Naive thymus-derived CD4-positive, alpha-beta T cell (primary cell): ENCODE measurements at regions of chr12 and their contacts with region 1.

Region 1: GRCh38 chr12:117587631-117588287 is 226.3 kb upstream of the NOS1 start:
- DNase-seq: peak in 3 of 9 donors; percentile 3 to 53 (median 5)
- ATAC-seq: peak; percentile 46
- H3K4me3 ChIP-seq: no peak overlapping the region
- H3K4me3 Mint-ChIP-seq: no peak overlapping the region
- H3K27ac ChIP-seq: no peak overlapping the region
- H3K27ac Mint-ChIP-seq: no peak overlapping the region
- H3K4me1 ChIP-seq: no peaks in the 10 kb centered on the region
- H3K4me1 Mint-ChIP-seq: no peaks in the 10 kb centered on the region
- H3K27me3 ChIP-seq: no peaks in the 10 kb centered on the region
- H3K27me3 Mint-ChIP-seq: peaks cover 5 to 32% (median 13%) of the 10 kb centered on the region in 5 donors

Region 2: GRCh38 chr12:115810122-115810901 is 1777.4 kb before region 1 on chr12:
- CTCF ChIA-PET with region 1: no interaction called
- POLR2A ChIA-PET with region 1: no interaction called
- intact Hi-C with region 1: no loop called
- DNase-seq: no peak
- ATAC-seq: no peak
- H3K4me3 ChIP-seq: no peak overlapping the region
- H3K4me3 Mint-ChIP-seq: no peak overlapping the region
- H3K27ac ChIP-seq: no peak overlapping the region
- H3K27ac Mint-ChIP-seq: no peak overlapping the region
- H3K4me1 ChIP-seq: no peaks in the 10 kb centered on the region
- H3K4me1 Mint-ChIP-seq: no peaks in the 10 kb centered on the region
- H3K27me3 ChIP-seq: no peaks in the 10 kb centered on the region
- H3K27me3 Mint-ChIP-seq: peaks cover 0 to 27% (median 17%) of the 10 kb centered on the region in 5 donors

Region 3: GRCh38 chr12:117212563-117213190 is 375.1 kb before region 1 on chr12:
- CTCF ChIA-PET with region 1: no interaction called
- POLR2A ChIA-PET with region 1: no interaction called
- intact Hi-C with region 1: loop called in 1 of 2 experiments (anchors 2 kb)
- DNase-seq: peak; percentile 18 to 58 (median 45)
- ATAC-seq: peak; percentile 72
- H3K4me3 ChIP-seq: no peak overlapping the region
- H3K4me3 Mint-ChIP-seq: no peak overlapping the region
- H3K27ac ChIP-seq: no peak overlapping the region
- H3K27ac Mint-ChIP-seq: no peak overlapping the region
- H3K4me1 ChIP-seq: no peaks in the 10 kb centered on the region
- H3K4me1 Mint-ChIP-seq: peaks cover 0 to 4% (median 0%) of the 10 kb centered on the region in 7 donors
- H3K27me3 ChIP-seq: no peaks in the 10 kb centered on the region
- H3K27me3 Mint-ChIP-seq: peaks cover 10 to 21% (median 16%) of the 10 kb centered on the region in 5 donors

Region 4: DNA sequence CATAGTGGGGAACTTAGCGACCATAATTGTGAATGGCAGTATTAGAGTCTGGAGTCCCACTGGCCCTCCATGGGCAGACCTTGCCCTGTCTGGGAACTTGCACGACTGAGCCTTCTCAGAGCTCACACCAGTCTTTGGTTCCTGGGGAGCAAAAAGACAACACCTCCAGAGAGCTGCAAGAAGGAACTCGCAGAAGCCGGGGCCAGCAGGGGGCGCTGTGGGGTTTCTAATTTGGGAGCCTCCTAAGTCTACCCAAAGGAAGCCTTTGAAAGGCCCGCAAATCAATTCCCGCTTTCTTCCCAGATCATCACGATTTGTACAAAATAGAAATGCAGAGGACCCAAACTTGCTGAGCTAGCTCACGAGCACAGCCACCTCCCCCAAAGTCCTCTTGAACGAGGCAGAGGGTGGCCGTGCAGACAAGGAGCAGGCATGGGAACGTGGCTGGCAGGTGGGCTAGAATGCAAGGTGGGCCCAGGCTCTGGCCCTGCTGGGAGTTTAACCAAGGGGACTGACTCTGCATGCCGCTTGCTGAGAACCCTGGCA is 351.2 kb before region 1 on chr12:
- CTCF ChIA-PET with region 1: no interaction called
- POLR2A ChIA-PET with region 1: no interaction called
- intact Hi-C with region 1: loop called in 1 of 2 experiments (anchors 1 kb)
- DNase-seq: peak in 8 of 9 donors; percentile 31 to 82 (median 42)
- ATAC-seq: no peak
- H3K4me3 ChIP-seq: no peak overlapping the region
- H3K4me3 Mint-ChIP-seq: peak overlapping the region in 1 of 10 donors; percentile 54
- H3K27ac ChIP-seq: no peak overlapping the region
- H3K27ac Mint-ChIP-seq: no peak overlapping the region
- H3K4me1 ChIP-seq: no peaks in the 10 kb centered on the region
- H3K4me1 Mint-ChIP-seq: no peaks in the 10 kb centered on the region
- H3K27me3 ChIP-seq: no peaks in the 10 kb centered on the region
- H3K27me3 Mint-ChIP-seq: peaks cover 1 to 28% (median 22%) of the 10 kb centered on the region in 5 donors

Region 5: GRCh38 chr12:117367011-117367638 is 220.6 kb before region 1 on chr12:
- CTCF ChIA-PET with region 1: no interaction called
- POLR2A ChIA-PET with region 1: no interaction called
- intact Hi-C with region 1: loop called in 1 of 2 experiments (anchors 1 kb)
- DNase-seq: peak in 3 of 9 donors; percentile 14 to 49 (median 26)
- ATAC-seq: peak; percentile 28
- H3K4me3 ChIP-seq: no peak overlapping the region
- H3K4me3 Mint-ChIP-seq: no peak overlapping the region
- H3K27ac ChIP-seq: no peak overlapping the region
- H3K27ac Mint-ChIP-seq: no peak overlapping the region
- H3K4me1 ChIP-seq: no peaks in the 10 kb centered on the region
- H3K4me1 Mint-ChIP-seq: peaks cover 0 to 8% (median 0%) of the 10 kb centered on the region in 7 donors
- H3K27me3 ChIP-seq: no peaks in the 10 kb centered on the region
- H3K27me3 Mint-ChIP-seq: peaks cover 21 to 45% (median 42%) of the 10 kb centered on the region in 5 donors